Psoas muscle (tissue), 8 donors: ENCODE measurements at regions of chr9 and their contacts with region 1.

Region 1: DNA sequence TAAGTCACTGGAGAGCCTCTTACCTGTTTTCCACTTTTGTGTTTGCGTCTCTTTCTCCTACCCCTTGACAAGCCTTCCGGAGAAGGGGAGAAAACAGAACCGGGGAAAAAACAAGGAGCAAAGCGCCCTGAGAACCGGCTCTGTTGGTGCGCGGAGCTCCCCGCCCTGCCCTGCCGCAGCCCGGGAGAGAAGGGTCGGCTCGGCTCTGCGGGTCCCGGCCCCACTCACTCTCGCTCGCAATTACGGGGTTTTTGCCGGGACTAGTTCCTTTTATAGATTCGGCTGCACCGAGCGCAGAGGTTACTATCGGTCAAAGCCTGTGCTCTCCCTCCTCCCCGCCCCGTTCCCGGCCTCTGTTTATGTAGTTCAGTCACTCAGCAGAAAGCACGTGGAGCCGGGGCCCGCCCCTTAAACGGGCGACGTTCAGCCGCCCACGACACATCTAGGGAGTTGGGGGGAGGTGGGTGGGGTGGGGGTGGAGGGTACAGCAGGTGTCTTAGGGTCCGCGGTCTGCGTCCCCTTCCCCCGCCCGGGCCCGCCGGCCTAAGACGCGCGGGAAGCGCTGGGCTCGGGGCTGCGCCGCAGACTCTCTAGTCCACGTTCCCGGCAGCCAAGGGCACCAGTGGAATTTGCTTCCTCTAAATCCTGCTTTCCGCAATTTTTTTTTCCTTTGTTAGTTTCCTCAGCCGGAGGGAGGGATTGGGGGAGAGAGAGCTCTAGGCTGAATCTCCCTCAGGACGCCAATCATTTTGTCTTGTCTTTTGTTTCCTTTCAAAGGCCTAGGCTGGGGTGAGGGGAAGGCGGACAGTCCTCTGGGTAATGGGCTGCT is at the start of gene ABCA1:
- DNase-seq: peak; percentile 93 to 96
- ATAC-seq: peak; percentile 84 to 91 (median 86)
- H3K4me3 ChIP-seq: peak within 1 kb of the TSS; percentile 99
- H3K27ac ChIP-seq: peak within 1 kb of the TSS; percentile 89
- H3K4me1 ChIP-seq: peaks cover 18% of the 10 kb centered on the region
- H3K27me3 ChIP-seq: no peaks in the 10 kb centered on the region
- CTCF ChIP-seq: no peak
- total RNA-seq, gene ABCA1: 8.2 to 26.1 (median 16.2) TPM

Region 2: DNA sequence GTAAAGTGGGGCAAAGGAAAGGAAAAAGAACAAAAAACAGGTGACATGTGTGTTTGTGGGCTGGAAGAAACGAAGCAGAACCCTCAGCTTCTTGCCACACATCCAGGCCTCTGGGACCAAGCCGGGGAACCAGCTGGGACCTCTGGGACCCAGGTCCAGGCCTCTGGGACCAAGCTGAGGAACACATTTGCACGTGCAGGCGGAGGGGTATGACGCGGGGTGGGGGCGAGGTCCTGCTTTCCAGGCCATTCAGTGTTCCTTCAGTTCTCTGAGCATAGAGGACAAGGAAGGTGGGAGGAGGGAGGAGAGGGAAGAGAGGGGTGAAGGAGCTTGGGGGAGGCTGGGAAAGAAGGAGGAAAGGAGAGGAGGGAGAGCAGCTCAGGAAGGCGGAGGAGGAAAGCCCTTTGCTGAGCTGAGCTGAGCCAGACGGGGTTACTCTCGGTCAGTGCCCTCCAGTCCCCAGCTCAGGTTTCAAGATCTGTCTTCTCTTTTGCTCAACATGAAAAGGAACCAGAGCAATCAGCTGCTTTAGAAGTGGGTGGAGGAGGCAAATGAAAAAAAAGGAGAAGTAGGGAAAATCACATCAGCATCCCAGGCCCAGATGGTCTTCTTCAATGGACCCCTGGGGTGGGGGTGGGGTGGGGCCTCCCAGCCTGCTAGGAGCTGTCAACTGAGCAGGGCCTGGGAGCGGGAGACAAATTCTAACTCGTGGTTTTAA is 59.3 kb before region 1 on chr9:
- intact Hi-C with region 1: loop called (anchors 5 to 10 kb)
- DNase-seq: peak; percentile 72 to 86
- ATAC-seq: peak; percentile 88 to 95 (median 89)
- H3K4me3 ChIP-seq: no peak overlapping the region
- H3K27ac ChIP-seq: peak overlapping the region; percentile 81
- H3K4me1 ChIP-seq: peaks cover 69% of the 10 kb centered on the region
- H3K27me3 ChIP-seq: no peaks in the 10 kb centered on the region
- CTCF ChIP-seq: no peak

Region 3: GRCh38 chr9:104968025-104968982 is 40.2 kb after region 1 on chr9:
- intact Hi-C with region 1: loop called (anchors 1 kb)
- DNase-seq: peak; percentile 92 to 94
- ATAC-seq: peak; percentile 91 to 96 (median 92)
- H3K4me3 ChIP-seq: peak overlapping the region; percentile 94
- H3K27ac ChIP-seq: peak overlapping the region; percentile 99
- H3K4me1 ChIP-seq: peaks cover 18% of the 10 kb centered on the region
- H3K27me3 ChIP-seq: no peaks in the 10 kb centered on the region
- CTCF ChIP-seq: no peak

Region 4: GRCh38 chr9:105064315-105065097 is 136.4 kb after region 1 on chr9:
- intact Hi-C with region 1: loop called in 1 of 2 experiments (anchors 5 kb)
- DNase-seq: peak; percentile 91 to 97
- ATAC-seq: peak; percentile 95 to 97 (median 96)
- H3K4me3 ChIP-seq: peak overlapping the region; percentile 33
- H3K27ac ChIP-seq: peak overlapping the region; percentile 88
- H3K4me1 ChIP-seq: peaks cover 21% of the 10 kb centered on the region
- H3K27me3 ChIP-seq: no peaks in the 10 kb centered on the region
- CTCF ChIP-seq: no peak

Region 5: DNA sequence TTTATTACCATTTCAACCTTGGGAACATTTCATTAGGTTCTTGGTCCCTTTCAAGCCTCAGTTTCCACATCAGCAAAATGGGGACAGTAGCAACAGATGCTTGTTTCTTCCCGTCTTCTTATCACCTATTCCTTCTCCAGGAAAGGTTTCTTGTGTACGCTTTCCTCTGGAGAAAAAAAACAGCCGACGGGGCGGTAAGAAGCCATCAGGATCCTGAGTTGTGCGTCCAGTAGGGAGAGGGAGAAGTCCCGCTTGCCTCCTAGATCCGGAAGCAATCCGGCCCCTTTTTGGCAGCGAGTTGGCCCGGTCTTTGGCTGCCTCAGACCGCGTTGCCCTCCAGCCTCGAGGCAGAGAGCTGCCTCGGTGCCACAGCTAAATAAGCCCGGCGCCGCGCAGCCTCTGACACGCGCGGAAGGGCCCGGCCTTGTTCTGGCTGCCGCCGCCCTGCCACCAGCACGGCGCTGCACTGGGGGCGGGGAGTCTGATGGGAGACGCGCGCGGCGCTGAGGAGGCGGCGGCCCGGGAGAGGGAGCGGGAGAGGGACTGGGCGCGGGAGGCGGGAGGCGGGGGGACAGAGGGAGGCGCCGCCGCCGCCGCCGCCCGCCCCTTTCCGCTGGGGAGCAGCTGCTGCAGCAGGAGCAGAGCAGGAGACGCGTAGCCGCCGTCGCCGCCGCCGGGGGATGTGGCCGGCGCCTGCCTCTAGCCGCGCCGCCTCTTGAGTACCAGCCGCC is 316.0 kb after region 1 on chr9 and contains the start of gene SLC44A1:
- intact Hi-C with region 1: loop called in 1 of 2 experiments (anchors 5 kb)
- DNase-seq: peak; percentile 99
- ATAC-seq: peak; percentile 98 to 99 (median 99)
- H3K4me3 ChIP-seq: peak within 1 kb of the TSS; percentile 83
- H3K27ac ChIP-seq: peak within 1 kb of the TSS; percentile 80
- H3K4me1 ChIP-seq: peaks cover 9% of the 10 kb centered on the region
- H3K27me3 ChIP-seq: no peaks in the 10 kb centered on the region
- CTCF ChIP-seq: peak; percentile 16
- total RNA-seq, gene SLC44A1: 7.0 to 18.9 (median 9.8) TPM